ENCODE measurements at regions of chr6 and their contacts with region 1.

Region 1: DNA sequence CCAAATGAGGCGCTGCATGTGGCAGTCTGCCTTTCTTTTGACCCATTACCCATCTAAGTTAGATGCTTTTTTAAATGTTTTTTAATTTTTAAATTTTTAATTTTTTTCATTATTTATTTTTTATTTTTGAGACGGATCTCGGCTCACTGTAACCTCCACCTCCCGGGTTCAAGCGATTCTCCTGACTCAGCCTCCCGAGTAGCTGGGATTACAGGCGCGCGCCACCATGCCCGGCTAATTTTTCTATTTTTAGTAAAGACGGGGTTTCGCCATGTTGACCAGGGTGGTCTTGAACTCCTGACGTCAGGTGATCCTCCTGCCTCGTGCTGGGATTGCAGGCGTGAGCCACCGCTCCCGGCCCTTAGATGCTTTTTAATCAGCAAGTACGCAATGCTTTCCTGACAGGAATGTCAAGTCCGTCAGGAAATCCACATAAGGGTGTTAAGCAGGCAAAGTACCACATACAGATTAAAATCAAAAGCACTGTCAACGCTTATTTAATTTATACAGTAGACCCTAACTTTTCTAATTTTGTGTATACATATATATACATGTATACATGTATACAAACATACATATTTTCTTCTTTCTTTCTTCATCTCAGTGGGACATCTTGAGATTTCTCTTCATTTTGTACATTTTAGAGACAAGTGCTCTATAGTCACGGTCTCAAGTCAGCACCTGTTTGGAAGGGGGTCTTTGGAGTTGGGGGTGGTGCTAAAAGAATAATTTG is 995 bp upstream of the GSTA4 start:
- DNase-seq: peak in 1 of 2 donors; percentile 34
- ATAC-seq: peak in 1 of 2 donors; percentile 4
- H3K4me3 ChIP-seq: peak overlapping the region; percentile 48 to 87 (median 70)
- H3K27ac ChIP-seq: peak overlapping the region; percentile 85 to 93 (median 92)
- H3K4me1 ChIP-seq: peaks cover 10 to 16% of the 10 kb centered on the region in 2 donors
- H3K27me3 ChIP-seq: no peaks in the 10 kb centered on the region
- CTCF ChIP-seq: no peak
- POLR2A ChIP-seq: no peak

Region 2: DNA sequence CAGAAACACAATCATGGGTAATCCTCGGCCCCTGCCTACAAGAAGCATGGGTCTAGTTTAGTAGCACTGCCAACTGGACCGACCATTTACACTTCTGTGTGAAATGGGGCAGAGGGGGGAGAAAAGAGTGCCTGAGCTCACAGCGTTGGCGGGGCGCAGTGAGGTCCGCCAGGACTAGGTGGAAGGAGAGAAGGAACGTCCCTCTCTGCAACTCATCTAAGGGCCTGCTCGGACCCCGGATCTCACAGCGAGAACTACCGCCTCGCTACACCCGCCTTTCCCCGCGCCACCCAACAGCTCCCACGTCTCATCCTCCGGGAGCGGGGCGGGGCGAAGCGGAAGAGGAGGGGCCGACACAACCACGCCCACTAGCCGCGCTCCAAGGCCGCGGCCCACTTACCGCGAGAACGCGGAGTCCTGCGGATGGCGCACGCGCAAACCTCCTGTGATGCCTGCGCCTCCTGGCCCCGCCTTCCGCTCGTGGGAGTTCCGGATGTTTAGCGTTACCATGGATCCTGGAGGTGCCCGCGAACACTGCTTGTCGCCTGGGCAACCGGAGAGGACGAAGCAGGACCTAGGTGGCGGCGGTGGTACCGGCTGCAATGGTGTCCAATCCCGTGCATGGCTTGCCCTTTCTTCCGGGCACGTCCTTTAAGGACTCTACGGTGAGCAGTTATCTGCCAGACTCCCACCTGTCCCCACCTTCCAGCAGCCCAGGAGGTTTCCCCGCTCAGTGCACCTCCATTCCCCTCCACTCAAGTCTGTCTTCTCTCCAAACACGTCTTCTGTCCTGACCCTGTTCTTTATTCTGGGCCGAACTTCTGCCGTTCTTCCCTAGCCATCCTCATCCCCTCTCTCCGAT is 576.0 kb before region 1 on chr6 and contains the start of gene EFHC1:
- in situ Hi-C with region 1: loop called in 2 of 4 experiments (anchors 25 kb)
- intact Hi-C with region 1: loop called (anchors 2 kb)
- DNase-seq: peak; percentile 93 to 96
- ATAC-seq: peak; percentile 94 to 96
- H3K4me3 ChIP-seq: peak within 1 kb of the TSS; percentile 70 to 91 (median 85)
- H3K27ac ChIP-seq: peak within 1 kb of the TSS; percentile 77 to 84 (median 82)
- H3K4me1 ChIP-seq: peaks cover 9 to 13% of the 10 kb centered on the region in 2 donors
- H3K27me3 ChIP-seq: no peaks in the 10 kb centered on the region
- CTCF ChIP-seq: no peak
- POLR2A ChIP-seq: peak; percentile 50 to 64
- total RNA-seq, gene EFHC1: 0.46 to 9.3 (median 1.5) TPM

Region 3: GRCh38 chr6:52686878-52687699 is 309.0 kb before region 1 on chr6:
- in situ Hi-C with region 1: no loop called
- intact Hi-C with region 1: no loop called
- DNase-seq: no peak
- ATAC-seq: no peak
- H3K4me3 ChIP-seq: no peak overlapping the region
- H3K27ac ChIP-seq: no peak overlapping the region
- H3K4me1 ChIP-seq: no peaks in the 10 kb centered on the region
- H3K27me3 ChIP-seq: no peaks in the 10 kb centered on the region
- CTCF ChIP-seq: no peak
- POLR2A ChIP-seq: no peak

Region 4: GRCh38 chr6:52829046-52829817 is 166.8 kb before region 1 on chr6:
- in situ Hi-C with region 1: no loop called
- intact Hi-C with region 1: no loop called
- DNase-seq: no peak
- ATAC-seq: no peak
- H3K4me3 ChIP-seq: no peak overlapping the region
- H3K27ac ChIP-seq: no peak overlapping the region
- H3K4me1 ChIP-seq: no peaks in the 10 kb centered on the region
- H3K27me3 ChIP-seq: no peaks in the 10 kb centered on the region
- CTCF ChIP-seq: no peak
- POLR2A ChIP-seq: no peak

Region 5: DNA sequence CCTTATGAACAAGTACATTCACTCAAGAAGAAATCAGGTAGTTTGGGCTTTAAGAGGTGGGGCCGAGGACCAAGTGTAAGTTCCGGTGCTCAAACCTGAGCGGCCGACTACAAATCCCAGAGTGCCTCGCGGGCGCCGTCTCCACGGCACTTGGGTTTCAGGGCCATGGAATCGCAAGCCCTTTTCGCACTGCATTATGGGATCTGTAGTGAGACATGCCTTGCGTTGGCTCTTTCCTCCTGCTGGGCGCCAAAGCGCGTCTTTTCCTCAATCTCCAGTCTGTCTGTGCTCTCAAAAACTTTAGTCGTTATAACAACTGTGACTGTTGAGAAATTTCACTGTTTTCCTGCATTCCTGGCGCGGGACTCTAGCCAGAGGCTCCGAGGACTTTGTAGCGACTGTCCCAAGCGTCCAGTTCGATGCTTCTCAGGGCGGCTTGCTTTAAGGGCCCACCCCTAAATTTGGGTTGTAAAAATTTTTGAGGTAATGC is 68.7 kb after region 1 on chr6:
- in situ Hi-C with region 1: no loop called
- intact Hi-C with region 1: loop called (anchors 1 kb)
- DNase-seq: peak; percentile 97
- ATAC-seq: peak; percentile 89 to 90
- H3K4me3 ChIP-seq: peak overlapping the region; percentile 71 to 98 (median 96)
- H3K27ac ChIP-seq: peak overlapping the region; percentile 89 to 95 (median 93)
- H3K4me1 ChIP-seq: peaks cover 34 to 41% of the 10 kb centered on the region in 2 donors
- H3K27me3 ChIP-seq: no peaks in the 10 kb centered on the region
- CTCF ChIP-seq: peak in 3 of 5 experiments; percentile 4 to 39 (median 16)
- POLR2A ChIP-seq: no peak

Region 6: DNA sequence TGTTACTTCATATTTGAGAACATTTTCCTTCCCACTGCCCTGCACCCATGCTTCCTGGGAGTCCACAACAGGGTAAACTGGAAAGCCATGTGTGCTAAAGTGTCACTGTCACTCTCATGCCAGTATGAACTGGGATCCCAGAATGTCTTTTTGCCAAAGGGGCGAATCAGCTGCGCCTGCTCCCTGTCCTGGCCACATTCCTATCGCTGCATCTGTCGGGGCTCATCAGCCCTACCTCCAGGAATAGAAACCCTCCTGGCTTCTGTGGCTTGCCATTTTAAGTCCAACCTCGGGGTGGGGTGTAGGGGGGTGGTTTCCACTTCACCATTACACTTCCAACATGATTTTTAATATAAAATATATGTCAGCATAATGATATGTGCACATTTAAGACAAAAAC is 668.5 kb after region 1 on chr6:
- in situ Hi-C with region 1: no loop called
- intact Hi-C with region 1: loop called (anchors 10 kb)
- DNase-seq: peak; percentile 80 to 92
- ATAC-seq: peak; percentile 82 to 83
- H3K4me3 ChIP-seq: peak overlapping the region; percentile 46 to 69 (median 53)
- H3K27ac ChIP-seq: peak overlapping the region; percentile 89 to 96 (median 92)
- H3K4me1 ChIP-seq: peaks cover 45 to 52% of the 10 kb centered on the region in 2 donors
- H3K27me3 ChIP-seq: no peaks in the 10 kb centered on the region
- CTCF ChIP-seq: peak in 3 of 5 experiments; percentile 10 to 43 (median 16)
- POLR2A ChIP-seq: peak in 1 of 2 donors; percentile 44